GM12878 (cell line): ENCODE measurements at regions of chr5 and their contacts with region 1.

Region 1: GRCh38 chr5:127909078-127909477 is 174.5 kb upstream of the SLC12A2 start:
- DNase-seq: no peak
- ATAC-seq: peak; percentile 96
- H3K4me3 ChIP-seq: no peak overlapping the region
- H3K27ac ChIP-seq: no peak overlapping the region
- H3K4me1 ChIP-seq: no peaks in the 10 kb centered on the region
- H3K27me3 ChIP-seq: no peaks in the 10 kb centered on the region
- CTCF ChIP-seq: peak; percentile 65 to 82 (median 75)
- EP300 ChIP-seq: no peak
- POLR2A ChIP-seq: no peak
- RAD21 ChIP-seq: peak; percentile 82

Region 2: DNA sequence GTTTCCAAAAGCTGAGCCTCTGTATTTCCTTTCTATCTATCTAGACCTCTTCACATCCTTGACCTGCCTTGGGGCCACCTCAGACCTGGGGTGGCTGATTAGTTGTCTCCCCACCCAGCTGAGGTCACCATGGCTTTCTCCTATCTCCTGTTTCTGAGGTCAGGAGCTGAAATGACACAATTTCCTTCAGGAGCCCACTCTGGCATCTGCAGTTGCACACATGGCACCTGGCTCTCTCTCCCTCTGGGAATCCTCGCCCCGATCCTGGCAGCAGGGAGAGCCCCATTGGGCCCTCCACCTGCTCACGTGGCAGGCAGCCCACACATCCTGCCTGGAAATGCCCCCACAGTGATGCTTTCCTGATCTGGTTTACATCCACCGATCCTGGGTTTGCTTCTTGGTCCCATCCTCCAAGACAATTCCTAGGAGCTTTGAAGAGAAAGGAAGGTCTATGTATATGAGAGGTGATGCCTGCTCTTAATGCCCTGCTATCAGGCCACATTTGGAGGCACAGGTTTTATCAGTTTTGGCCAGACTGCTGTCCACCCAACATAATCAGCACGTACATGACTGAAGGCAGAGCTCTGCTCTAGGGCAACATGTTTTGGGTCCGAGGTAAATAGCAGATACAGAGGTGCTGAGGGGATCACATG is 932.4 kb before region 1 on chr5:
- CTCF ChIA-PET with region 1: no interaction called
- POLR2A ChIA-PET with region 1: no interaction called
- RAD21 ChIA-PET with region 1: no interaction called
- SMC1A ChIA-PET with region 1: no interaction called
- in situ Hi-C with region 1: no loop called
- intact Hi-C with region 1: no loop called
- DNase-seq: no peak
- ATAC-seq: no peak
- H3K4me3 ChIP-seq: no peak overlapping the region
- H3K27ac ChIP-seq: no peak overlapping the region
- H3K4me1 ChIP-seq: peaks cover 13% of the 10 kb centered on the region
- H3K27me3 ChIP-seq: no peaks in the 10 kb centered on the region
- CTCF ChIP-seq: no peak
- EP300 ChIP-seq: no peak
- POLR2A ChIP-seq: no peak
- RAD21 ChIP-seq: no peak

Region 3: DNA sequence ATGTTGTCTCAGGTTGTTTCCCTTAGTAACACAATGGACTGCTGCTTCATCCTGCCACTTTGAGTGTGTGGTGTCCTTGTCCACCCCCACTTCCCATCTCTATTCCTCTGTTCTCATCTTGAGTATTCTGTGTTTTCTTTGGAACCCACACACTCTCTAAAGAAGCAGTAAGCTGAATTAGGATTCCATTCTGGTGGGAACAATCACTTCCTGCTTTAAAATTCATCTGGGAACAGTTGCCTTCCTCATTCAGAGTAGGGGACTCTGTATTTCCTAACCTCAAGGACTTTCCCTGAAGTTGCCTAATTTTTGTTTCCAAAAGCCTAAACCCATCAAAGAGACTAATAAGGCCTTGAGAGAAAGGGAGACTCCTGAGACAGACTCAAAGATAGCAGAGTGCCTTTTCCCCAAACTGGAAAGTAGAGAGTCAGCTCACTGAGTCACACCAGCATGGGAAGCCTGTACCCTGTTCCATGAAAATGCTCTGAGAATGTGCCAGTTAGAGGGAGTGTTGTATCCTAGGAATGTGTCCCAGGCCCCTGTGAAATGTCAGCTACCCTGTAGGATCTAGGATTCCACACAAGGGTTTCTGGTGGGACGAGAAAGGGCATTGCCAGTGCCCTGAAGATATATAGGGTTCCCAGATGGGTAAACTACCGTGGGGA is 142.3 kb before region 1 on chr5:
- CTCF ChIA-PET with region 1: no interaction called
- POLR2A ChIA-PET with region 1: no interaction called
- RAD21 ChIA-PET with region 1: no interaction called
- SMC1A ChIA-PET with region 1: no interaction called
- in situ Hi-C with region 1: no loop called
- intact Hi-C with region 1: no loop called
- DNase-seq: no peak
- ATAC-seq: no peak
- H3K4me3 ChIP-seq: no peak overlapping the region
- H3K27ac ChIP-seq: no peak overlapping the region
- H3K4me1 ChIP-seq: no peaks in the 10 kb centered on the region
- H3K27me3 ChIP-seq: no peaks in the 10 kb centered on the region
- CTCF ChIP-seq: no peak
- EP300 ChIP-seq: no peak
- POLR2A ChIP-seq: no peak
- RAD21 ChIP-seq: no peak

Region 4: DNA sequence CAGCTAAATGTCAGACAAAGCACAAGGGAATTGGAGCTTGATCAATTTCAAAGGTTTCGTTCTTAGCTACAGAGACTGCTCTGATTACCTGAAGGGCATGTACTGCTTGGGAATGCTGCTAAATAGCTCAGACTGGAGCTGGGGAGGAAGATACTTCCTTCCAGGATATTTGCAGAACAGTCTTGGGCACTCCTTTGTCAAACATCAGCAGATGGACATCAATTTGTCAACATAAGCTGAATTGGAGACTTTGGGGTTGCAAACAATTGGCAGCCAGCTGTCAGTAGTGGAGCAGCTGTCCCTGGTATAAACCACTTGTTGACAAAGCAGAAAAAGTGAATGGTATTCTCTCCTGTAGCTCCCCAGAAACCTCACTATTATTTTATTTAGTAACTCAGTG is 23.9 kb before region 1 on chr5:
- CTCF ChIA-PET with region 1: interaction called, 3 read pairs
- POLR2A ChIA-PET with region 1: interaction called, 4 read pairs
- RAD21 ChIA-PET with region 1: interaction called, 4 read pairs
- SMC1A ChIA-PET with region 1: interaction called, 10 read pairs
- in situ Hi-C with region 1: no loop called
- intact Hi-C with region 1: no loop called
- DNase-seq: no peak
- ATAC-seq: no peak
- H3K4me3 ChIP-seq: no peak overlapping the region
- H3K27ac ChIP-seq: no peak overlapping the region
- H3K4me1 ChIP-seq: no peaks in the 10 kb centered on the region
- H3K27me3 ChIP-seq: no peaks in the 10 kb centered on the region
- CTCF ChIP-seq: no peak
- EP300 ChIP-seq: no peak
- POLR2A ChIP-seq: no peak
- RAD21 ChIP-seq: no peak

Region 5: DNA sequence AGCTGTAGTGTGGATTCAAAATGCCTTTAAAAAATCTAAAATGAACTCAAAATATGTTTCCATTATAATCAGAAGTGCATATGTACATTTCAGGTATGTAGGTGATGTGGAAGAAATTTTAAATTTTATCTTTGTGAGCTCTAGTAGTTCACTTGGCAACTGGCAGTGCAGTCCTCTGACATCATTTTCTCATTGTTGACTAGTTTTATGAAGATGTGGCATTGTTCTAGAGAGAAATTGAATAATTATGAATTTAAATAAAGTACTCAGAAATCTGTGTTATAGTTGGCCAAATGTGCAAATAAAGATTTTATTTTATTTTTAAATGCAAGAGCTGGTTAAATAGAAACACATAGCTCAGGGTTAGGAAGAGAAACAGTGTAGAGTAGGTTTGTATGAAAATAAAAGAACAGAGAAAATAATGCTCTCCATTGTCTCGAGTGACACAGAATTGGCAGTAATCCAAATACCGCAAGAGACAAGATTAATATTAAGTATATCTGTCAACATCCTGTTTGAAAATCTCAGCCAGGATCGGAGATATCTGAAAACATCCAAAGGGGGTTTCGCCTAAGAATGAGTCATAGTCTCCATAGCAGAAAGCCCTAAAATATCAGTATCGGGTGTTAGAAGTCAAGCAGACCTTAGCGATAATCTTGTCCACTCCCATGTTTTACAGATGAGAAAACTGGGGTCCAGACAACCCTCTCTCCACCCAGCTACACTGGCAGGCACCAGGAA is 16.4 kb before region 1 on chr5:
- CTCF ChIA-PET with region 1: interaction called, 36 read pairs
- POLR2A ChIA-PET with region 1: interaction called, 3 read pairs
- RAD21 ChIA-PET with region 1: interaction called, 4 read pairs
- SMC1A ChIA-PET with region 1: interaction called, 7 read pairs
- in situ Hi-C with region 1: no loop called
- intact Hi-C with region 1: no loop called
- DNase-seq: no peak
- ATAC-seq: peak; percentile 69
- H3K4me3 ChIP-seq: no peak overlapping the region
- H3K27ac ChIP-seq: no peak overlapping the region
- H3K4me1 ChIP-seq: no peaks in the 10 kb centered on the region
- H3K27me3 ChIP-seq: no peaks in the 10 kb centered on the region
- CTCF ChIP-seq: no peak
- EP300 ChIP-seq: no peak
- POLR2A ChIP-seq: no peak
- RAD21 ChIP-seq: no peak

Region 6: GRCh38 chr5:127923804-127924570 is 14.9 kb after region 1 on chr5:
- CTCF ChIA-PET with region 1: interaction called, 30 read pairs
- POLR2A ChIA-PET with region 1: interaction called, 3 read pairs
- RAD21 ChIA-PET with region 1: interaction called, 4 read pairs
- SMC1A ChIA-PET with region 1: interaction called, 12 read pairs
- in situ Hi-C with region 1: no loop called
- intact Hi-C with region 1: no loop called
- DNase-seq: no peak
- ATAC-seq: peak; percentile 65
- H3K4me3 ChIP-seq: no peak overlapping the region
- H3K27ac ChIP-seq: no peak overlapping the region
- H3K4me1 ChIP-seq: no peaks in the 10 kb centered on the region; the same call in 1 of the 2 replicates
- H3K27me3 ChIP-seq: no peaks in the 10 kb centered on the region
- CTCF ChIP-seq: no peak
- EP300 ChIP-seq: no peak
- POLR2A ChIP-seq: no peak
- RAD21 ChIP-seq: no peak

Region 7: GRCh38 chr5:128077526-128077925 is 168.4 kb after region 1 on chr5:
- CTCF ChIA-PET with region 1: interaction called, 28 read pairs
- POLR2A ChIA-PET with region 1: interaction called, 9 read pairs
- RAD21 ChIA-PET with region 1: interaction called, 25 read pairs
- SMC1A ChIA-PET with region 1: interaction called, 30 read pairs
- in situ Hi-C with region 1: no loop called
- intact Hi-C with region 1: loop called (anchors 2 kb)
- DNase-seq: no peak
- ATAC-seq: no peak
- H3K4me3 ChIP-seq: no peak overlapping the region
- H3K27ac ChIP-seq: no peak overlapping the region; the same call in 1 of the 2 replicates
- H3K4me1 ChIP-seq: peaks cover 5% of the 10 kb centered on the region
- H3K27me3 ChIP-seq: no peaks in the 10 kb centered on the region
- CTCF ChIP-seq: no peak
- EP300 ChIP-seq: no peak
- POLR2A ChIP-seq: no peak
- RAD21 ChIP-seq: no peak